AG04449 (cell line): ENCODE measurements at regions of chr17 and their contacts with region 1.

Region 1: GRCh38 chr17:38557836-38558727 is 47.7 kb downstream of the SRCIN1 start:
- DNase-seq: peak; percentile 28
- H3K4me3 ChIP-seq: peak overlapping the region; percentile 54
- CTCF ChIP-seq: peak; percentile 99

Region 2: GRCh38 chr17:38568274-38568673 is 10.2 kb after region 1 on chr17:
- CTCF ChIA-PET with region 1: interaction called, 18 read pairs
- POLR2A ChIA-PET with region 1: no interaction called
- DNase-seq: no peak
- H3K4me3 ChIP-seq: no peak overlapping the region
- CTCF ChIP-seq: no peak

Region 3: DNA sequence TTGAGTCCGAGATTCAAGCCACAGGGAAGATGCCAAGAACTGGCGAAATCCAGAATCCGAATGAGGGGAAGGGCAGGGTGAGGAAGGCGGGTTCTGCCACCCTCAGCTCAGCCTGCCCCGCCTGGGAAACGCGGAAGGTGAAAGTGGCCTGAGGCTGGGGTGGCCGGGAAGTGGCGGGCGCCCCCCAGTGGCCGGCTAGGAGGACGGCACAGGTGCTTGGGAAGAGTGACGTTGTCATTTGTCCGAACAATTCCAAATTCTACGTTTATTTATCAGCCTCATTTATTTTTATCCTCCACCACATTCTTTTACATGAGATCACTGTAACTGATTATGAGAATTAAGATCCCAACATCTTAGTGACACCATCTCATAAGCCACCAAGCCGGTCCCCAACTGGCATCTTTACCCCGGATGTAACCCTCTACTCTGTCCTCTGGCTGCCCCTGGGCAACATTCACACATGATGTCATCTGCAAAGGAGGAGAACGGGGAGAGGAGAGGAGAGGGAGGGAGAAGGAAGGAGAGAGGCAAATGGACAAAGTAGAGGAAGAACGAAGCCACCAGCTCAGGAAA is 26.4 kb after region 1 on chr17:
- CTCF ChIA-PET with region 1: interaction called, 29 read pairs
- POLR2A ChIA-PET with region 1: no interaction called
- DNase-seq: no peak
- H3K4me3 ChIP-seq: no peak overlapping the region
- CTCF ChIP-seq: peak; percentile 89

Region 4: DNA sequence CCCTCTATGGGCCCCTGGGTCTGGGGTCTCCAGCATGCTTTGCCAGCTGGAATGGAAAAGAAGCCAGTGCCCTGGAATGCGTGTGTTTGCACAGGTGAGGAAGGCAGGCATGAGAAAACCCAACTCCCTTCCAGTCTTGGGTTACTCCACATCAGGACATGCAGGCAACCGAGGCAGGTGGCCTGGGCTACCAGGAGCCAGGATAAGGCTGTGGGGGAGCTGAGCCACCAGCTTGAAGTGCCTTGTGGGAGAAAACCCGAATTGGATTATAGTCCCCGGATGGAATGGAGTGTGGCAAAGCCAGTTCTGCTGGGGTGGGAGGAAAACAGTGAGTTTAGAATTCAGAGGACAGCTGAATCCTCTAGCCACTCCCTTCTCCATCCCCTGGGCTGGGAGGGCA is 40.5 kb after region 1 on chr17:
- CTCF ChIA-PET with region 1: interaction called, 18 read pairs
- POLR2A ChIA-PET with region 1: no interaction called
- DNase-seq: no peak
- H3K4me3 ChIP-seq: no peak overlapping the region
- CTCF ChIP-seq: no peak

Region 5: GRCh38 chr17:38667099-38667786 is 109.2 kb after region 1 on chr17:
- CTCF ChIA-PET with region 1: interaction called, 310 read pairs
- POLR2A ChIA-PET with region 1: no interaction called
- DNase-seq: no peak
- H3K4me3 ChIP-seq: no peak overlapping the region
- CTCF ChIP-seq: peak; percentile 98